ENCODE measurements at regions of chr17 and their contacts with region 1.

Region 1: DNA sequence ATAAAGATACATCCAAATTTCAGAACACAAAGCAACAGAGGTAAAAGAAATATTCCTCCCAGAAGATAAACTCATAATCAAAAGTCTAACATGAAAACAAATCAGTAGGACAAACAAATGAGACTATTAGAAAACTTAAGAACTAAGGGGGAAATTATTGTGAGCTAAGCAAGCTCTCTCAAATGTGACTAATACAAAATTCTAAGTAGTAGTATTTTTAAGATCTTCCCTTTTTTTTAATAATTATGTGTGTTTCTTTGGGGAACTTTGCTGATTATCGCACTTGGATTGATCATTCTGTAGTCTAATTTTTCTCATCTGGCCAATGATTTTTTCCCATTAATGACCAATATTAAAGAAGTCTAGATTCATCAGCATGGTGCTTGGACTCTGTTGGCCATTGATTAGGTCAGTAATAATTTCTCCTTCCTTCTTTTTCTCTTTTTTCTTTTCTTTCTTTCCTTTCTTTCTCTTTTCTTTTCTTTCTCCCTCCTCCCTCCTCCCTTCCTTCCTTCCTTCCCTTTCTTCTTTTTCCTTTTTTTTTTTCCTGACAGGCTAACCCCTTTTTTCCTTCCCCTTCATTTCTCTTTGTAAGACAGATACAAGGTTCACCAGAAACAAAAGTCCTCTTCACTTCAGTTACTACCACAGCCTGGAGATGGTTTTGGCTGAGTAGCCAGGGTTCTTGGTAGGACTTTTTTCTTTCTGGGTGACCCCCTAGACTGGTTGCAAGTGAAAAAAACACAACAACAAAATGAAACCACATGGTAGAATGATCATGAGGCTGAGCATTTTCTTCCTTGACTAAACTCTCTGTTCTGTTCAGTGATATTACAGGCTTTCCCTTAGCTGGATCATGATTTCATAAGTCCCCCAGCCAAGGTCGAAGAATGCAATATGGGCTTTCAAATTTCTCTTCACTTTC is 2.9 kb upstream of the ABCA6 start:
- DNase-seq: no peak
- H3K4me3 ChIP-seq: no peak overlapping the region
- H3K27ac ChIP-seq: no peak overlapping the region
- H3K4me1 ChIP-seq: no peaks in the 10 kb centered on the region
- CTCF ChIP-seq: no peak

Region 2: DNA sequence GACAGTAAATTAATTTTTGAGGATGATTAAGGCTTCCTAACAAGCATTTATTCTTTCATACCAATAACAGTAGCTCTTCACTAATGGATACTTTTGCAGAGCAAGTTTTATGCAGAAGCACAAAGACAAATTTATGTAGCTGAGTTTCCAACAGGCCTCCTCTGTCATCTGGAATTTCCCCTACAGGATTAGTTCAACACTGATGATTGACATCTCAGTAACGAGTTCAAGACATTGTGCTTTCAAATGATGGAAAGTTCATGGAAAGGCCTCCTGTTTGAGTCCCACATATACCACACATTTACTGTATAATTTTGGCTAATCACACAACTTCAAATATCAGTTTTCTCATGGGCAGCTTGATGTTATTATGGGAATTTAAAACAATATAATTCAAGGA is 43.5 kb after region 1 on chr17:
- CTCF ChIA-PET with region 1: no interaction called
- POLR2A ChIA-PET with region 1: no interaction called
- intact Hi-C with region 1: loop called (anchors 1 kb)
- DNase-seq: no peak
- H3K4me3 ChIP-seq: no peak overlapping the region
- H3K27ac ChIP-seq: no peak overlapping the region
- H3K4me1 ChIP-seq: no peaks in the 10 kb centered on the region
- CTCF ChIP-seq: no peak

Measured in OCI-LY7 (cell line).